ENCODE measurements at regions of chr1 and their contacts with region 1.

Region 1: GRCh38 chr1:75785983-75786853 is at the start of gene RABGGTB:
- DNase-seq: peak; percentile 93
- ATAC-seq: peak; percentile 95
- H3K4me3 Mint-ChIP-seq: peak within 1 kb of the TSS; percentile 99
- H3K27ac Mint-ChIP-seq: peak within 1 kb of the TSS; percentile 99
- H3K4me1 Mint-ChIP-seq: peaks cover 35% of the 10 kb centered on the region
- H3K27me3 Mint-ChIP-seq: peaks cover 5% of the 10 kb centered on the region
- CTCF ChIP-seq: no peak
- total RNA-seq, gene RABGGTB: 102 to 139 TPM (median 112 TPM) in 3 replicates

Region 2: GRCh38 chr1:75796376-75797272 is 10.4 kb after region 1 on chr1 and contains the start of gene MSH4:
- CTCF ChIA-PET with region 1: no interaction called
- POLR2A ChIA-PET with region 1: interaction called, 12 read pairs
- DNase-seq: no peak
- ATAC-seq: peak; percentile 46
- H3K4me3 Mint-ChIP-seq: no peak within 1 kb of the TSS
- H3K27ac Mint-ChIP-seq: peak within 1 kb of the TSS; percentile 33; the same call in 1 of the 2 replicates
- H3K4me1 Mint-ChIP-seq: no peaks in the 10 kb centered on the region
- H3K27me3 Mint-ChIP-seq: no peaks in the 10 kb centered on the region; the same call in 1 of the 2 replicates
- CTCF ChIP-seq: no peak
- total RNA-seq, gene MSH4: 0.27 to 0.33 TPM (median 0.30 TPM) in 3 replicates

Measured in WTC11 (cell line).